CD4-positive, alpha-beta memory T cell (primary cell): ENCODE measurements at regions of chr10 and their contacts with region 1.

Region 1: GRCh38 chr10:4131407-4132228 is 346.6 kb upstream of the KLF6 start:
- DNase-seq: peak; percentile 74 to 84 (median 81)
- H3K4me3 ChIP-seq: peak overlapping the region; percentile 15 to 30
- H3K4me3 Mint-ChIP-seq: no peak overlapping the region
- H3K27ac ChIP-seq: peak overlapping the region; percentile 46
- H3K27ac Mint-ChIP-seq: no peak overlapping the region
- H3K4me1 ChIP-seq: peaks cover 62% of the 10 kb centered on the region
- H3K4me1 Mint-ChIP-seq: peaks cover 25 to 41% (median 38%) of the 10 kb centered on the region in 4 donors
- H3K27me3 ChIP-seq: no peaks in the 10 kb centered on the region
- H3K27me3 Mint-ChIP-seq: no peaks in the 10 kb centered on the region

Region 2: GRCh38 chr10:2874963-2875362 is 1256.7 kb before region 1 on chr10:
- CTCF ChIA-PET with region 1: no interaction called
- POLR2A ChIA-PET with region 1: no interaction called
- intact Hi-C with region 1: no loop called
- DNase-seq: no peak
- H3K4me3 ChIP-seq: no peak overlapping the region
- H3K4me3 Mint-ChIP-seq: no peak overlapping the region
- H3K27ac ChIP-seq: no peak overlapping the region
- H3K27ac Mint-ChIP-seq: no peak overlapping the region
- H3K4me1 ChIP-seq: no peaks in the 10 kb centered on the region
- H3K4me1 Mint-ChIP-seq: no peaks in the 10 kb centered on the region
- H3K27me3 ChIP-seq: no peaks in the 10 kb centered on the region
- H3K27me3 Mint-ChIP-seq: peaks cover 7 to 10% of the 10 kb centered on the region in 2 donors

Region 3: GRCh38 chr10:4081685-4082111 is 49.9 kb before region 1 on chr10:
- CTCF ChIA-PET with region 1: no interaction called
- POLR2A ChIA-PET with region 1: interaction called, 5 read pairs
- intact Hi-C with region 1: loop called (anchors 5 kb)
- DNase-seq: no peak
- H3K4me3 ChIP-seq: no peak overlapping the region
- H3K4me3 Mint-ChIP-seq: peak overlapping the region in 7 of 8 donors; percentile 0 to 68 (median 41)
- H3K27ac ChIP-seq: no peak overlapping the region
- H3K27ac Mint-ChIP-seq: peak overlapping the region; percentile 69 to 90 (median 88)
- H3K4me1 ChIP-seq: peaks cover 61% of the 10 kb centered on the region
- H3K4me1 Mint-ChIP-seq: peaks cover 42 to 59% (median 52%) of the 10 kb centered on the region in 4 donors
- H3K27me3 ChIP-seq: no peaks in the 10 kb centered on the region
- H3K27me3 Mint-ChIP-seq: no peaks in the 10 kb centered on the region